ENCODE measurements at regions of chr3 and their contacts with region 1.

Region 1: DNA sequence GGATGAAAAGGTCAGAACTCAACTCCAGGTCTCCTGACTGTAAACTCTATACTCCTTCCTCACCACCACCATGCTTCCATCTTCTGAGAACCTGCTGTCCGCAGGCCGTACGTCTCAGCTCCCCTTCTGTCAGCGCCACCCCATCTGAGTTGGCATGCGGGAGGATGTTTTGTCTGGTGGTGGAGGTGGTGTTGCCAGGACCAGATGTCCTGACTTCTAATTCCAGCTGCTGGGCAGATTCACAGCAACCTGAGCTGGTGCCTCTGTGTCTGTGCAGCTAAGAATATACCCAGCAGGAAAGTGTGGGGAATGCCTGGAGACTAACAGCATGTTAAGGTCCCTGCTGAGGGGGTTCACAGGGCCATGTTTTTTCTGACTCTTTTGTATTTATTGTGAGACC is 23.2 kb downstream of the PLA1A start:
- DNase-seq: no peak
- ATAC-seq: no peak
- H3K4me3 ChIP-seq: no peak overlapping the region
- H3K4me3 Mint-ChIP-seq: no peak overlapping the region
- H3K27ac ChIP-seq: no peak overlapping the region
- H3K27ac Mint-ChIP-seq: no peak overlapping the region
- H3K4me1 ChIP-seq: no peaks in the 10 kb centered on the region
- H3K4me1 Mint-ChIP-seq: peaks cover 10% of the 10 kb centered on the region
- H3K27me3 ChIP-seq: no peaks in the 10 kb centered on the region
- H3K27me3 Mint-ChIP-seq: no peaks in the 10 kb centered on the region
- CTCF ChIP-seq: no peak

Region 2: DNA sequence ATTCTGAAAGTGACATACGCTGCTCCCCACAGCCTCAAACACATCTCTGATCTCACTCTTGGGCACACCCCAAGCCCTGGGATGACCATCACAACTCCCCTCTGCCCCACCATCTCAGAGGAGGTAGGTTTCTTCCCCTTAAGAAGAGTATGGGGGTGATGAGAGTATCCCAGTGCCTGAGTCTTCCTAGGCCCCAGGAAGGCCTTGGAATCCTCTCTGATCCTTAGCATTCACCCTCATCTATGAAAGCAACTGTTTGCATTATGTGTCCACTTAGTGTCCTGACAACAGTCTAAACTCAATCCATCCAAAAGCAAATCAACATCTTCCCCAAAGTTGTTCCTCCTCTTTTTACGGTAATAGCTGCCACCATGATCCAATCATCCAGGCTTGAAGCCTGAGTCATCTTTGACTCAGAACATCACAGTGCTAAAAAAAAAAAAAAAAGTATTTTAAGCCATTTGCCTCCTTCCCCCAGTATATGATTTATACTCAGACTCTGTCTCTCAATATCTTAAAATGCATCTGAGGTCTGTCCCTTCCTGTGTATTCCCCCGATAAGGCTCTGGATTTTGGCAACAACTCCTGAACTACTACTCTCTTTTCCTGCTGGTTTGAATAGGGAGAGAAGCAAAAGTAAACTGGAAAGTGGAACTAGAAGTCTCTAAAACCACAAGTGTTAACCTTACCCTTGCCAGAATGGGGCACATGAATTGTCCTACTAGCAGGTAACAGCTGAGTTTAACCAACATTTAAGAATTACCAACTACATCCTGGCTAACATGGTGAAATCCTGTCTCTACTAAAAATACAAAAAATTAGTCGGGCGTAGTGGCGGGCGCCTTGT is 17.0 kb after region 1 on chr3:
- CTCF ChIA-PET with region 1: no interaction called
- POLR2A ChIA-PET with region 1: interaction called, 16 read pairs
- intact Hi-C with region 1: no loop called
- DNase-seq: peak; percentile 65
- ATAC-seq: peak; percentile 60
- H3K4me3 ChIP-seq: peak overlapping the region in 2 of 5 experiments; percentile 29 to 30
- H3K4me3 Mint-ChIP-seq: peak overlapping the region; percentile 85
- H3K27ac ChIP-seq: peak overlapping the region in 1 of 2 donors; percentile 65
- H3K27ac Mint-ChIP-seq: peak overlapping the region; percentile 97
- H3K4me1 ChIP-seq: peaks cover 16 to 20% of the 10 kb centered on the region in 2 donors
- H3K4me1 Mint-ChIP-seq: peaks cover 24% of the 10 kb centered on the region
- H3K27me3 ChIP-seq: no peaks in the 10 kb centered on the region
- H3K27me3 Mint-ChIP-seq: no peaks in the 10 kb centered on the region
- CTCF ChIP-seq: no peak

Region 3: DNA sequence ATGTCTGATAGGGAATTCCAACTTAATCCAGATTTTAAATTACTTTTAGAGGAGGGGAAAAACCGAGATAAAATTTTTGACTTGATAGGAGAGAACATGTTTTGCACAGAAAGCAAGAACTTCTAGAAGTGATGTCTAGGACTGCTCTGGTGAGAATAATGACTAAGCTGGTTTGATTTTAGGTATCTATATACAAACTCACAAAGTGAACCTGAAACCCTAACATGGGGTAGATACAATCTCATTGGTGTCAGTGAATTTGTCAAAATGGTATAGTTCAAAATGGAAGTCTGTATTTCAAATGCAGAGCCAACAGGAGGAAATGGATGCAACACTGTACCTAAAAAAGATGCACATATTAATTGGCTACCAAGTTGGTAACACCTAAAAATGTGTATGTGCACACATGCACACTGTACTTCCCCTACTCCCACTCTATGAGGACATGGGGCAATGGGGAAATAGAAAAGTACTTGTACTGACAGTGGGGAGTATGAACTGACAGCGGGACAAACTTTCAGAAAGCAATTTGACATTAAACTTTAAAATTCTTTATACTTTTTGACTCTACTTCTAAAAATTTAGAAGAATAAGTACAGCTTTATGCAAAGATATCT is 214.0 kb after region 1 on chr3:
- CTCF ChIA-PET with region 1: no interaction called
- POLR2A ChIA-PET with region 1: no interaction called
- intact Hi-C with region 1: no loop called
- DNase-seq: no peak
- ATAC-seq: no peak
- H3K4me3 ChIP-seq: no peak overlapping the region
- H3K4me3 Mint-ChIP-seq: no peak overlapping the region
- H3K27ac ChIP-seq: no peak overlapping the region
- H3K27ac Mint-ChIP-seq: no peak overlapping the region
- H3K4me1 ChIP-seq: no peaks in the 10 kb centered on the region
- H3K4me1 Mint-ChIP-seq: peaks cover 4% of the 10 kb centered on the region
- H3K27me3 ChIP-seq: no peaks in the 10 kb centered on the region
- H3K27me3 Mint-ChIP-seq: no peaks in the 10 kb centered on the region
- CTCF ChIP-seq: no peak

Measured in B cell (primary cell).